ENCODE measurements at regions of chr4 and their contacts with region 1.

Region 1: GRCh38 chr4:124334119-124334518 is 378.4 kb downstream of the ANKRD50 start:
- DNase-seq: no peak

Region 2: DNA sequence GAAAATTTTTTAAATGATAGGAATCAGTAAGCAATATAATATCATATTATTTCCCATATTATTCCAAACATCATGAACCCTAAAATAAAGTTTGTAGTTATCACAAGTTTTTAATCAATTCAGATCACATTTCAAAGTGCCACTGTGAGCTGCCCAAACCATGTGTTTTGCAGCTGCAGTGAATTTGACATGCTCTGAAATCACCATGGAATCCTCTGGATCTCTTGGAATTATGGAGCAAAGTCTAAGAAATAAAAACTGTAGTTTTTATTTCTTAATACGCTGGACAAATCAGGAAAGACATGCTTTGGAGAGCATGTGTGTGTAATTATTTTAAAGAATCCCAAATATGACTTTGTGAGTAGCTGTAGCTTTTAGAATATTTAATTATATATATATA is 115.8 kb after region 1 on chr4:
- intact Hi-C with region 1: no loop called
- DNase-seq: no peak

Region 3: GRCh38 chr4:124712372-124713184 is 378.5 kb after region 1 on chr4 and contains the start of gene ANKRD50:
- intact Hi-C with region 1: loop called (anchors 5 kb)
- DNase-seq: peak; percentile 95
- total RNA-seq, gene ANKRD50: 16.1 TPM

Region 4: GRCh38 chr4:124936427-124936826 is 602.3 kb after region 1 on chr4:
- intact Hi-C with region 1: loop called (anchors 10 kb)
- DNase-seq: peak; percentile 76

Region 5: DNA sequence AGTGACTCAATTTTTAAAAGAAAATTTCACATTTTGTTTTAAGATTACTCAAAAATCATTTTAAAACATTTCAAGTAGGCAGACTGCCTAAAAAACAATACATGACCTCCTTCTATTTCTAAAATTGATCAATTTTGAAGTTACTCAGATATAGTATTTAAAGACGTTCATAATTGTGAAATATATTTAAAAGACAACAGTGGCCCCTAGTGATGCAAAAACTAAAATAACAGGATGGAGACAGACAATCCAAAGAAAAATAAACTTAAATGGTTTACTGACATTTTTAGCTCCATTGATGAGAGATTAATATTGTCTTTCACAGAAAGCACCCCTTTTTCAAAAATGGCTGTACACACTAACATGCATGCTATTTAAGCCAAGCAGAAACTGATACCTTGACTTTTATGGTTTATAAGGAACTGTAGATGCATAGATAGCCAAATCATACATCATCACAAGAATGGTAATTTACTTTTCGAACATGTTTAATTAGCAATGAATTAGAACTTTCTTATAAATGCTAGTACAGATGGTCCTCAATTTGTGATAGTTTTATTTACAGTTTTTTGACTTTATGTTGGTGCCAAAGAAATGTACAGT is 910.8 kb after region 1 on chr4:
- intact Hi-C with region 1: loop called (anchors 2 kb)
- DNase-seq: no peak

Region 6: DNA sequence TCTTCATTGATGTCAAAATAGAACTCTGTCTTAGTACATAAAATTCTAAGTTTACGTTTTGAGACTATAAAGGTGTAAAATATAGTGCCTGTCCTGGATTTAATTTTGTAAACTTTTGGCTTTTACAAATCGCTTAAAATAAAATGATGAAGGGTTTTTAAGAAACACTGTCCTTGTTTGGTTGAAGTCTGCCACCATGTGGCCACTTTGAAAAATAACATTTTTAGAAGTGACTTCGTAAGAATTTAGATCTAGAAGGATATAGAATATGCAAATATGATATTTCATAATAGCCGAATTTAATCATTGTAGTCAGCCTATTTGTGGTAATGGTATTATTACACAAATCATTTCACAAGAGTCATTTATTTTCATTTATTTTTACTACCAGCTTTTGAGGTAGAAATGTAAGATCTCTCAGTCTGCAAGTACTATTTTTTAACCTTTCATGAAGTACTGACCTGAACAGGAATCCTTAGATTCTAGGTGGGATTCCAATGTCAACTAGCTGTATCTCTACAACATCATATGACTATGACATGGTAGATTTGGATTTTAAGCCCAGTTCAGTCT is 949.7 kb after region 1 on chr4:
- intact Hi-C with region 1: loop called (anchors 5 kb)
- DNase-seq: no peak

Measured in cardiac septum (tissue), 1 donor.